ENCODE measurements at regions of chr11 and their contacts with region 1.

Region 1: GRCh38 chr11:88016392-88017170 is 158.7 kb downstream of the RAB38 start:
- DNase-seq: peak; percentile 55
- H3K4me3 ChIP-seq: no peak overlapping the region
- CTCF ChIP-seq: peak; percentile 68

Region 2: DNA sequence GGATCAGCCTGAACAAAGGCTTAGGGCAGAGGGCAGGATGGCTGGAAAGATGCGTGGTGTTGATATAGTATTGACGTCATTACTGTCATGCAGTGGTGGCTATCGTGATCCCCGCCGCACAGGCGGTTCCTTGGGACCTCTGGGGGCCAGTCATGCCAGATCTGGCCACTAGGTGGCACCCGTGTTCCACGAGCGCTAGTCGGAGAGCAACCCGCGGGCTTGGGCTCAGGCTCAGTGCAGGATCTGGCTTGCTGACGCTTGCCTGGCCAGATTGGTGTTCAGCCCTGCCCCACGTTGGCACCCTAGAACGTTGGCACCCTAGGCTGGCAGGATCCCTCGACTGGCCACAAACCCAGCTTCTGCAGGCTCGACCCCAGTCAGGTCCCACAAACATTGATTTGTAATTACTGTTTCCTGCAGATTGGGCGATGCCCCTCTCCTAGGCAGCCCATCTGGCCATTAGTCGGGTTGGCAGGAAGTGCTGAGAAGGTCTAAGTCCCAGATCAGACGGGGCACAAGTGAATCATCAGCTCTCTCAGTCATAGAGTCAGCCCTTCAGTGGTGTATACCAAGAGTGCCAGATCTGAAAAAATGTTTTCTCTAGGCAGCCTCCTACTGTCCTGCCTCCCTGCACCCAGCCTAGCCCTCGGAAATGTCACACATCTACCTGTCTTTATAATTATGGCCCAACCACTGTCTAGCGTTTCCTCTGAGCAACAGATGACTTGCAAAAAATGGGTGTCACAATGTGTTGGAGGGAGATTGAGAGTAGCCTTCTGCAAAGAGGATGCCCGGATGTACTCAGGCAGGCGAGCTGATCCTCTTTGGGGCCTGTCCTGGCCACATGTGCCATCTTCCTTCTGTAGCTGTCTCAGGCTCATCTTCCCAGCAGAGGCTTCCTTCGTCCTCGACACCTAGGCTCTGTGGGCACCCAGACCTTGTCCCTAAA is 663.5 kb before region 1 on chr11:
- CTCF ChIA-PET with region 1: interaction called, 14 read pairs
- POLR2A ChIA-PET with region 1: no interaction called
- DNase-seq: peak; percentile 17
- H3K4me3 ChIP-seq: peak overlapping the region; percentile 31
- CTCF ChIP-seq: peak; percentile 98

Region 3: GRCh38 chr11:88535916-88536547 is 519.5 kb after region 1 on chr11:
- CTCF ChIA-PET with region 1: interaction called, 94 read pairs
- POLR2A ChIA-PET with region 1: no interaction called
- DNase-seq: no peak
- H3K4me3 ChIP-seq: no peak overlapping the region
- CTCF ChIP-seq: no peak

Region 4: GRCh38 chr11:88543902-88544655 is 527.5 kb after region 1 on chr11:
- CTCF ChIA-PET with region 1: interaction called, 94 read pairs
- POLR2A ChIA-PET with region 1: no interaction called
- DNase-seq: peak; percentile 70
- H3K4me3 ChIP-seq: no peak overlapping the region
- CTCF ChIP-seq: peak; percentile 90

Region 5: DNA sequence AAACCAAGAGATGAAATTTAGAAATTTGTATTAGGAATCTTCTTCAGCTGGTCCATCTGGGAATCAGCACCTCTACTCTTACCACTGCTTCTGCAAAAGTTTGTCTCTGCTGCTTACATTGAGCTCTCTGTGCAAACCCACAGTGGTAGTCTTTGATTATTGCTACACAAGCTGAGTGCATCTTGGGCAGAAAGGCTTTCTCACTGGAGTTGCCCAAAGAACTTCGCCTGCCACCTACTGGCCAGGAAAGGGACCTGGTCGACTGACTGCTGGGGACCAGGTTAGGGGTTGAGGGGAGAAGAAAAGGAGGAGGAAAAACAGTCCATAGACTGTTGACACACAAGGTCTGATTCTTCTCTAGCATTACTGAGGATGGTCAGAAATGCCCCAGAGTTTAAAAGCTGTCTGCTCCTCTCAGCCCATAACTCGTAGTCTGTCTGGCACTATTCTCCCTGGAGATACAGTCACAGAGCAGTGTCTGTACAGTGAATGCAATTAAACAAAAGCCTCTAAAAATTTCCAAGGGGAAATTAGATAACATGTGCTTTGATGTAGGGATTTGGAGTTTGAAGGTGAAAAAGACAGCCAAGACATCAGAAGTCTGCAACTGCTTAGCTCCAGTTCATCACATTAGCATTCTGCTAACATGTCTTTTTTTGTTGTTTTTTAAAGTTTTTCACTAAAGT is 535.9 kb after region 1 on chr11:
- CTCF ChIA-PET with region 1: interaction called, 37 read pairs
- POLR2A ChIA-PET with region 1: no interaction called
- DNase-seq: no peak
- H3K4me3 ChIP-seq: no peak overlapping the region
- CTCF ChIP-seq: peak; percentile 75